ENCODE measurements at regions of chr1 and their contacts with region 1.

Region 1: GRCh38 chr1:4397196-4397595 is 257.2 kb upstream of the AJAP1 start:
- DNase-seq: no peak
- H3K4me3 ChIP-seq: no peak overlapping the region
- H3K27ac ChIP-seq: no peak overlapping the region
- H3K4me1 ChIP-seq: no peaks in the 10 kb centered on the region
- H3K27me3 ChIP-seq: no peaks in the 10 kb centered on the region
- CTCF ChIP-seq: no peak
- EP300 ChIP-seq: no peak
- POLR2A ChIP-seq: no peak

Region 2: DNA sequence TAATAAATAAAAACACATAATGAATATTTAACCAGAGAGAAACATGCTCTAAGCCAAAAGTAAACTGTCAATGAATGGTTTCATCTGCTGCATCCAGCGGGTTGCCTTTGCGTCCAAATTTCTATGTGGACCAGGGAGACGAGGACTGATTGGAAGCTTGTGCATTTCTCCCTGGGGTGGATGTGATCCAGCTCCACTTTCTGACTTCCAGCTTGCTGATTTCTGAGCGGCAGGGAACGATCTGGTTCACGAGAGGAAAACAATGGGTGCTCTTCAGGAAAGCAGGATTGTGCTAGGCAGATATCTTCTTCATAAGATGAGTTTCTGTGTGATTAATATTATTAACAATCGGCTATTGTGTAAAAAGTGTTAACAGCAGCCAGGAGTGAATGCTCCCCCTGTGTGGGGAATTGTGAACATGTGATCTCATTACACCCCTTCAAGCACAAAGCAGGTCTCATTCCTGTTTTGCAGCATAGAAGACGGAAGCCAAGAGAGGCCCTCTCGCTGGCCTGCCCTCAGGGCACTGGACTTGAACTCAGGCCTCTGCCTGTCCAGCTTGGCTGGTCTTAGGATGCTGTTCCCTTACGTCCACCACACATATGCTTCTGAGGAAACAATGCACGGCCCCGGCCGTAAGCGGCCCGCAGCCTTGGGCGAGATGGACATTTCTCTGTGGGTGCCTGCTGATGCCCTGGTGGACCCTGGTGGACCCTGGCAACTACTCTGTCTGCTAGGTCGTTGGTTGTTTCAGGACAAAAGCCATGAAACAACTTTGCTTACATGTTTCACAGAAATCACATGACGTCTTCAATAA is 313.8 kb before region 1 on chr1:
- intact Hi-C with region 1: no loop called
- DNase-seq: no peak
- H3K4me3 ChIP-seq: no peak overlapping the region
- H3K27ac ChIP-seq: no peak overlapping the region
- H3K4me1 ChIP-seq: no peaks in the 10 kb centered on the region
- H3K27me3 ChIP-seq: no peaks in the 10 kb centered on the region
- CTCF ChIP-seq: no peak
- EP300 ChIP-seq: no peak
- POLR2A ChIP-seq: no peak

Region 3: DNA sequence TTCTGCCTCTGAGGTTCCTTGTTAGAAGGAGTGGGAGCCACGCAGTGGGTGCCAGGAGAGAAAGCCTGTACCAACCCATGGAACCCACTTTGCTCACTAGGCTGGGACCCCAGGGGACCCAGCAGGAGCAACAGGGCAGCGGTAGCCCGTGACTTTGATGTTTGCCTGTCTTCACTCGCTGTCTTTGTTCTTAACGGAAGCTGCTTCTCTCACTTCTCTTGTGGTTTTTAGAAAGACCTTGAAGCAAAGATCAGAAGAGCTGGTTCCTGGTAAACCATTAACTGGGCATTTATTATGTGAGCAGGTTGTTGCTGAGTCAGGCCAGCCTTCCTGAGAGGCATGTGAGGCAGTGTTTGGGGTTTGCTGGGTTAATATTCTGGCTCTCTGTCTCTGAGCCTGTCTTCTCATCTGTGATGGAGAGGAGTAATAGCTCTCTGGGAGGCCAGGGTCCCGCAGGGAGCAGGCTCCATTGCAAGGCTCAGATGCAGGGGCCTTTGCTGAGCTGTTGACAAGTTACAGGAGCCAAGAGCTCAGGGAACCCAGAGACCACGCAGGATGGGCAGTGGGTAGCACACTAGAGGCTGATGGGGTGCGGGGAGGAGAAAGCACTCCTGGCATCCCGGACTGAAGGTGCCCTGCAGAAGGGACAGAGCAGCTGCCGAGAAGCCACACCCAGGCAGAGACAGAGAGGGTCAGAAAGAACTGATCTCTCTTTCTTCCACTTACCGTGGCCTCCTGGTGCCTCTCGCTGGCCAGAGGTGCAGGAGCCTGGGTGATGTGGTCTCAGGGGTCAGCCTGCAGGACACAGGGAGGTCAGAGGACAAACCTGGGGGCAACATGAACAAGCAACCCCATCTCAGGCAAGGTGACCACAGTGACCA is 129.6 kb before region 1 on chr1:
- intact Hi-C with region 1: no loop called
- DNase-seq: no peak
- H3K4me3 ChIP-seq: no peak overlapping the region
- H3K27ac ChIP-seq: no peak overlapping the region
- H3K4me1 ChIP-seq: no peaks in the 10 kb centered on the region
- H3K27me3 ChIP-seq: no peaks in the 10 kb centered on the region
- CTCF ChIP-seq: no peak
- EP300 ChIP-seq: no peak
- POLR2A ChIP-seq: no peak

Region 4: DNA sequence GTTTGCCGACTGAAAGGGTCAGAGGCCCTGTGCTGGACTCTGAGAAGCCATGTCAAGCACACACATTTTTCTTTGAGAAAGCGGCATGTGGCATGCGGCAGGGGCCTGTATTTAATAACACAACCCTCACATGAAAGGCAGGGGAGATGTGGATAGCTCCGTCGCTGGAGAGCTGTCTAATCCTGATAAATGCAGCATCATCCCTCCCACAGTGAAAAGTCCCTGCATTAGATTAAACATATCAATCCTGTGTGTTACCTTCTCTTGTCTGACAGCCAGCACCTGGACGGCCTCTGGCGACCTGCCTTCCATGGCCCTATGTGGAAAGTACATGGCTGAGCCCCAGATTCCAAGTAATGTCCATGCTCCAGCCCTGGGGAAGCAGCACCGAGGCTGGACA is 55.8 kb before region 1 on chr1:
- intact Hi-C with region 1: loop called in 1 of 4 experiments (anchors 2 kb)
- DNase-seq: no peak
- H3K4me3 ChIP-seq: no peak overlapping the region
- H3K27ac ChIP-seq: no peak overlapping the region
- H3K4me1 ChIP-seq: no peaks in the 10 kb centered on the region
- H3K27me3 ChIP-seq: no peaks in the 10 kb centered on the region
- CTCF ChIP-seq: no peak
- EP300 ChIP-seq: no peak
- POLR2A ChIP-seq: no peak

Region 5: GRCh38 chr1:4495809-4496208 is 98.6 kb after region 1 on chr1:
- intact Hi-C with region 1: no loop called
- DNase-seq: no peak
- H3K4me3 ChIP-seq: no peak overlapping the region
- H3K27ac ChIP-seq: no peak overlapping the region
- H3K4me1 ChIP-seq: no peaks in the 10 kb centered on the region
- H3K27me3 ChIP-seq: no peaks in the 10 kb centered on the region
- CTCF ChIP-seq: no peak
- EP300 ChIP-seq: no peak
- POLR2A ChIP-seq: no peak

Region 6: GRCh38 chr1:4825800-4826450 is 428.7 kb after region 1 on chr1:
- intact Hi-C with region 1: no loop called
- DNase-seq: no peak
- H3K4me3 ChIP-seq: no peak overlapping the region
- H3K27ac ChIP-seq: no peak overlapping the region
- H3K4me1 ChIP-seq: peaks cover 3% of the 10 kb centered on the region
- H3K27me3 ChIP-seq: no peaks in the 10 kb centered on the region
- CTCF ChIP-seq: no peak
- EP300 ChIP-seq: no peak
- POLR2A ChIP-seq: no peak

Measured in ovary (tissue), 10 donors.